ENCODE measurements at regions of chr11 and their contacts with region 1.

Region 1: DNA sequence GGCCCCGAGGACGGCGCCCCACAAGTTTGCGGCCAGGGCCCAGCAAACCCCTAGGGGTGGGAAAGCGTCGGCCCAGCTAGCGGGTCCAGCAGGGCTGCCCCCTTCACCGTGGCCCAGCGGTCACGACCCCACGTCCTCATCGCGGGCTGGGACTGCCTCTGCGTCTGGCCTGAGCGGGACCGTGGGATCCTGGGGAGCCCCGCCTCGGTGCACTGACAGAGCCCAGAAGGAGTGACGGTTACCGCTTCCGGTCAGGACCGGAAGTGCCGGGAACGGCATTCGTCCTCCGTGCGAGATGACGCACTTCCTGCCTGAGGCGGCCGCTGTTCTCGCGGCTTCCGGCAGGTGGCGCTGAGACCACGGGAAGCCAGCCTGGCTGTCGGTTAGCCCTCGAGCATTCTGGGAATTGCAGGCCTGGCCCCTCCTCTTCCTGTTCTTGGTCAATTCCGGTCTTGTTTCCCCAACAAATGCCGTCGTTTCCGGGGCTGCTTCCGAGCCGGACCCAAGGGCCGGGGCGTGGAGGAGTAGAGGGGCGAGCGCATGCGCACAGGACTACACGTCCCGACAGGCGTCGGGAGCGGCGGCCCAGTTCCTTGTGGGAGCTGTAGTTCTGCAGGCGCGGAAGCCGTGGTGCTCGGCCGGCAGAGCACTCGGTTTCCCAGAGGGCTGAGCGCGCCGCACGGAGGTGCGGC is at the start of gene TSSC4:
- DNase-seq: peak; percentile 100
- H3K4me3 Mint-ChIP-seq: peak within 1 kb of the TSS; percentile 93
- H3K27ac Mint-ChIP-seq: peak within 1 kb of the TSS; percentile 91
- H3K4me1 Mint-ChIP-seq: peaks cover 11% of the 10 kb centered on the region
- H3K27me3 Mint-ChIP-seq: peaks cover 2% of the 10 kb centered on the region
- total RNA-seq, gene TSSC4: 61.8 and 62.9 TPM in 2 replicates

Region 2: DNA sequence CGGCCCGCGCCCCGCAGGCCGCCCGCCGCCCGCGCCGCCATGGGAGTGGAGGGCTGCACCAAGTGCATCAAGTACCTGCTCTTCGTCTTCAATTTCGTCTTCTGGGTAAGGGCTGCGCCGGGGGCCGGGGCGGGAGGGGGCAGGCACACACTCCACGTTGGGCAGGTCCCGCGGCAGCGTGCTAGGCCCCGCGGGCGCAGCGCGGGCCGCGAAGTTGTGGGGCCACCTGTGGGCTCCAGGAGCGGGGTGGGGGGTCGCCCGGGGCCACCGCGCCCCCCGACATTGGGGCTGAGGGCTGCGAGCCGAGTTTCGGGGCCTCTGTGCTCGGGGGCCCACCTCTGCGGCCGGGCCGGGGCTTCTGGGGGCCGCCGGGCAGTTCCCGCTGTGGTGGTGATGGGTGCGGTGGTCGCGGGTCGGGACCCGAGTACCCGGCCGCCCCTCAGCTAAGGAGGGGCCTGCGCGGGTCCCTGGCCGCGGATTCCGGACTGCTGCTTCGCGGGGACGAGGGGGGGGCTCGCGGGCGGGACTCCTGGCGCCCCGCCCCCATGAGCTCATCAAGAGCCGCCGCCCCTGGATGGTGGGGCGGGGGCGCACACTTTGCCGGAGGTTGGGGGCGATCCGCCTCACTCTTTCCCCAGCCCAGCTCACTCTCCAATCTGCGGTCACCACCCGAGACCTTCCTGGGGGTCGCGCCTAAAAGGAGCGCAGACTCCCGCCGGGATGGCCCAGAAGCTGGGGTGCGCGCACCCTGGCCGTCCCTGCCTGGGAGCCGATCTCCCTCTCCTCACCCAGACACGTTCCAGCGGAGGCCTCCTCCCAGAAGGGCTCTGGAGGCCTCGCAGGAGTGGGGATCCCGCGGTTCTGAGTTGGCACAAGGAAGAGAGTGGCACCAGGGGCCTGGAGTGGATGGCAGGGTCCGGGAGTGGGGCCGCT is 22.4 kb before region 1 on chr11:
- intact Hi-C with region 1: loop called (anchors 1 kb)
- DNase-seq: peak; percentile 87
- H3K4me3 Mint-ChIP-seq: peak overlapping the region; percentile 93
- H3K27ac Mint-ChIP-seq: peak overlapping the region; percentile 86
- H3K4me1 Mint-ChIP-seq: peaks cover 18% of the 10 kb centered on the region
- H3K27me3 Mint-ChIP-seq: peaks cover 2% of the 10 kb centered on the region

Region 3: GRCh38 chr11:2420502-2421225 is 20.4 kb after region 1 on chr11:
- intact Hi-C with region 1: loop called (anchors 1 kb)
- DNase-seq: peak; percentile 91
- H3K4me3 Mint-ChIP-seq: no peak overlapping the region
- H3K27ac Mint-ChIP-seq: no peak overlapping the region
- H3K4me1 Mint-ChIP-seq: no peaks in the 10 kb centered on the region
- H3K27me3 Mint-ChIP-seq: no peaks in the 10 kb centered on the region

Region 4: GRCh38 chr11:2444821-2445745 is 44.9 kb after region 1 on chr11 and contains the start of gene KCNQ1:
- intact Hi-C with region 1: loop called (anchors 1 kb)
- DNase-seq: peak; percentile 90
- H3K4me3 Mint-ChIP-seq: peak within 1 kb of the TSS; percentile 91
- H3K27ac Mint-ChIP-seq: peak within 1 kb of the TSS; percentile 64
- H3K4me1 Mint-ChIP-seq: peaks cover 13% of the 10 kb centered on the region
- H3K27me3 Mint-ChIP-seq: peaks cover 19% of the 10 kb centered on the region
- total RNA-seq, gene KCNQ1: 6.4 TPM in 2 replicates

Region 5: GRCh38 chr11:2846056-2846455 is 445.8 kb after region 1 on chr11:
- intact Hi-C with region 1: no loop called
- DNase-seq: no peak
- H3K4me3 Mint-ChIP-seq: no peak overlapping the region
- H3K27ac Mint-ChIP-seq: no peak overlapping the region
- H3K4me1 Mint-ChIP-seq: no peaks in the 10 kb centered on the region
- H3K27me3 Mint-ChIP-seq: no peaks in the 10 kb centered on the region

Region 6: DNA sequence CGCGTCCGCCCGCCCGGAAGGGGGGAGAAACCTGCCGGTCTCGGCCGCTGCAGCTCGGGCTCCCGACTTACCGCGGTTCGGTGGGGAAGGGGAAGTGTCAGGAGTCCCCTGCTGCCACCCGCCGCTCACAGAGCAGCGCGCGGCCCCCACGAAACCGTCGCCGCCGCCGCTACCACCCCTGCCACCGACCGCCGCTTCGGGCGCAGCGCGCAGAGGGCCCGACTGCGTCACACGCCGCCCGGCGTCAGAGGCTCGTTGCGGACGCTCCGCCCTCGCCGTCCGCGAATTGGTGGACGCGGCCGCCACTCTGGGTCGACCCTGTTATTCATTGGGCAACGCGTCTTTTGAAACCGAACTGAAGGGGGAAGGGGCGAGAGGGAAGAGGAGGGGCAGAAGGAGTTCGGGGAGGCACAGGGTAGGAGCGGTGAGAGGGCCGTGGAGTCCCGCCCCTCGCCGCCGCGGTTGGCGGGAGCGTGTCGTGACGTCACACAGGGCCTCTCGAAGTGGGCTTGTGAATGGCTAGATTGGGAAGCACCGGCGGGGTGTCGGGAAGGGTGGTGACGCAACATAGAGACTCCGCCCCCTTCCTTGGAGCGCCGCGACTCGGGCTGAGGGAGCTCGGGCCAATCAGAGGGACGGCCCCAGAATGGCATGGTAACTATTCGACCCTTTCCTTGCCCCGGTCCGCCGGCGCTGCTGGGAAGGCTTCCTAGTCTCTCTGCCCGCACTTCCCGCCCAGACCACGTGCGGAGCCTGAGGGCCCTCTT is 1397.3 kb after region 1 on chr11 and contains the start of gene NUP98:
- intact Hi-C with region 1: loop called (anchors 5 kb)
- DNase-seq: peak; percentile 100
- H3K4me3 Mint-ChIP-seq: peak within 1 kb of the TSS; percentile 99
- H3K27ac Mint-ChIP-seq: peak within 1 kb of the TSS; percentile 99
- H3K4me1 Mint-ChIP-seq: peaks cover 35% of the 10 kb centered on the region
- H3K27me3 Mint-ChIP-seq: no peaks in the 10 kb centered on the region
- total RNA-seq, gene NUP98: 122 and 129 TPM in 2 replicates

Measured in activated CD4-positive, alpha-beta T cell treated with anti-CD3 and anti-CD28 coated beads, Interleukin-2, amount 10 ng/mL, durations not matched to agents 24 days and 14 days (primary cell).